ENCODE measurements at regions of chr1 and their contacts with region 1.

Region 1: DNA sequence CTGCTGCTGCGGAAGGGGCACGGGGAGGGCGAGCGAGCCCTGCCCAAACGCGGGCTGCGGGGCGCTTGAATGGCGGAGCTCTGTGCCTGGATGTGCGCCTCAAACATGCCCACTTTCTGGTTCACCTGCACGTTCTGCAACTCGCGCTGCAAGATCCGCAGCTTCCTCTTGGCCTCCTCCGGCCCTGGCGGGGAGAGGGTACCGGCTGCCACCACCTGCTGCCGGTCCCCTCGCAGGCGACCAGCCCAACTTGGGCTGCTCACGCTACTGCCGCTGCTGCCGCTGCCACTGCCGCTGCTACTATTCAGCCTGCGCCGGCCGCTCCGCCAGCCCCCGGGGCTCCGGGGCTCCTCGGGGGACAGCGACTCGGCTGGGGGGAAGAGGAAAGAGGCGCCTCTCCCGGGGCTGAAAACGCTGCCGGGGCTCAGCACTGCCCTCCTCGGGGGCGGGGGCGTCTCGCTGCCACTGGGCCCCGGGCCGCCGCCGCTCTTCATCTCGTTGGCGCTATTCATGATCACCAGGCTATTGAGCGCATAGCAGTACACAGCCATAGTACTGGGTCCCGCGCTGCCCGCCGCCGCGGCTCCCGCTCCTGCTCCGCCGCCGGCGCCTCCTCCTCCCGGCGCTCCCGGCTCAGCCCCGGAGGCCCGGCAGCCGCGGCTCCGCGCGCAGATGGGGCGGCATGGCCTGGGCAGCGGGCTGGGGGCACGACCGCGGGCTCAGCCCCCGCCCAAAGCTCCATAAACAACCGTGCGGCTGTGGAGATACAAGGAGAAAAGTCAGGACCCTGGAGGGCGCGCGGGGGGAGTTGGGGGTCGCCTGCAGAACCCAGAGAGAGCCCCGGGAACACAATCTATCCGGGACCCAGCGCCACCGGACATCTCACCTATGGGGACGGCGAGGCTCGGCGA is 1.9 kb downstream of the ITPKB start:
- DNase-seq: peak in 8 of 10 donors; percentile 45 to 77 (median 60)
- ATAC-seq: peak; percentile 7 to 11
- H3K4me3 Mint-ChIP-seq: peak overlapping the region; percentile 89 to 99 (median 97)
- H3K27ac Mint-ChIP-seq: peak overlapping the region; percentile 85 to 99 (median 97)
- H3K4me1 Mint-ChIP-seq: peaks cover 24 to 65% (median 47%) of the 10 kb centered on the region in 4 donors
- H3K27me3 Mint-ChIP-seq: no peaks in the 10 kb centered on the region

Region 2: DNA sequence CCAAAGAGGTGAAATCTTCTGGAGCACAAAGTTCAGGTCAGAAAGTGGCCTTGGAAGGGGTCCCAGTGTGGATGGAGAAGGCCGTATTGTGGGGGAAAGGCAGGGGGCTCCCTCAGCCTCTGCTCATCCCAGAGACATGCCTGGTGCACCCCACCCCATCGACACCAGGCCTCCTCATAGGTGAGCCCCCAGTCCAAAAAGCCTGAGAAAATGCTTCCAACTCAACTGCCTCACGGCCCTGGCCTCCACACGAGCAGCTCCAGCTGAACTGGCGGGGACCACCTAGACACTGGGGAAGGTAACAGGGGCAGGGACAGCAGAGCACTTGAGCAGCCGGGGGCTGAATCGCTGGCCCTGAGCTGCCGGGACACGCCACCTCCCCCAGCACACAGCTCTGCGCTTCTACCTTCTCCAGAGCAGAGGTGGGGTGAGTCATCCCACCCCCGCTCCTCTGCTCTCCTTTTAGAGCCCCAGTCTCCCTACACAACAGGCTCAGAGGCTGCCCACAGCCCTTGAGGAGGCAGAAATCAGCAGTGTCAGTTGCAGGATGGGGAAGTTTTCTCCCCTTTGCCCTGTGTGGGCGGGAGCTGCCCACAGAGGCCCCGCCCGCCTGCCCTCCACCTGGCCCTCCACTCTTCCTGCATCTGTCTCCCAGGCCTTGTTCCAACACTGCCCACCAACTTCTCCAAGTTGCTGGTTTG is 94.1 kb before region 1 on chr1:
- POLR2A ChIA-PET with region 1: interaction called, 19 read pairs
- DNase-seq: peak in 4 of 10 donors; percentile 25 to 64 (median 52)
- ATAC-seq: peak; percentile 52 to 69
- H3K4me3 Mint-ChIP-seq: peak overlapping the region; percentile 53 to 86 (median 74)
- H3K27ac Mint-ChIP-seq: peak overlapping the region in 9 of 10 donors; percentile 88 to 97 (median 93)
- H3K4me1 Mint-ChIP-seq: peaks cover 28 to 70% (median 67%) of the 10 kb centered on the region in 4 donors
- H3K27me3 Mint-ChIP-seq: no peaks in the 10 kb centered on the region

Region 3: GRCh38 chr1:226662642-226663326 is 74.4 kb before region 1 on chr1:
- POLR2A ChIA-PET with region 1: interaction called, 10 read pairs
- DNase-seq: peak; percentile 61 to 93 (median 84)
- ATAC-seq: peak; percentile 83 to 88
- H3K4me3 Mint-ChIP-seq: peak overlapping the region in 9 of 10 donors; percentile 54 to 91 (median 81)
- H3K27ac Mint-ChIP-seq: peak overlapping the region in 1 of 10 donors; percentile 97
- H3K4me1 Mint-ChIP-seq: peaks cover 0 to 56% (median 0%) of the 10 kb centered on the region in 4 donors
- H3K27me3 Mint-ChIP-seq: no peaks in the 10 kb centered on the region

Region 4: DNA sequence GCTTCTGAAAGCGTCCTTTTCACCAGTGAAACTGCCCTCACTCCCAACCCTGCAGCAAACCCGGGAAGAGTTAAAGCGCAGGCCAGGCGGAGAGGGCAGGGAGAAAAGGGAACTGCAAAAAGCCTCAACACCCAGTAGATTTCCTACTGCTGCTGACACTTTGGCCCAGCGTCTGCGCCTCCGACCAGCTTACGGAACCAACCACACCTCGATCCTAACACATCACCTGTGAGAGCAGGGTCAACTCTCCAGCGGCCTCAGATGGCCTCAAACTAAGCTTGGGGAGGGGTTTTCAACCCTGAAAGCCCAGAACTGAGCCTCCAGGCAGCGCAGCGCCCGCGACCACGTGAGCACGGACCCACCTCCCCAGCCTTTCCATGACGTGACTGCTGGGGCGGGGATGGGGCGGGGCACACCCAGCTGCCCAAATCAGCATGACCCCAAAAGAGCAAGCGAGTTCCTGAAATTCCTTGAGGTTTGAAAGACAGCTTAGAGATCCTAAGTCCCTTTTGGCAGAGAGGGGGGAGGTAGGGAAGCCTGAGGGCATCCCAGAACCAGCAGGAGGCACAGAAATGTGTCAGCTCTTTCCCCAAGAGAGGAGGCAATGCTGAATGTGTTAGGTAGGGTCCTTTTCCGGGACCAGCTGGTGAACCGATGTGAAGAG is 57.2 kb before region 1 on chr1:
- POLR2A ChIA-PET with region 1: interaction called, 14 read pairs
- DNase-seq: peak; percentile 65 to 89 (median 76)
- ATAC-seq: peak; percentile 13 to 30
- H3K4me3 Mint-ChIP-seq: peak overlapping the region; percentile 75 to 97 (median 88)
- H3K27ac Mint-ChIP-seq: peak overlapping the region; percentile 99 to 100 (median 99)
- H3K4me1 Mint-ChIP-seq: peaks cover 70 to 100% (median 99%) of the 10 kb centered on the region in 4 donors
- H3K27me3 Mint-ChIP-seq: no peaks in the 10 kb centered on the region

Region 5: GRCh38 chr1:226697151-226697939 is 39.8 kb before region 1 on chr1:
- POLR2A ChIA-PET with region 1: interaction called, 11 read pairs
- DNase-seq: peak in 3 of 10 donors; percentile 48 to 76 (median 72)
- ATAC-seq: peak; percentile 72 to 86
- H3K4me3 Mint-ChIP-seq: peak overlapping the region; percentile 34 to 85 (median 77)
- H3K27ac Mint-ChIP-seq: peak overlapping the region; percentile 98 to 100 (median 99)
- H3K4me1 Mint-ChIP-seq: peaks cover 52 to 98% (median 95%) of the 10 kb centered on the region in 4 donors
- H3K27me3 Mint-ChIP-seq: no peaks in the 10 kb centered on the region

Region 6: GRCh38 chr1:226712742-226713419 is 24.3 kb before region 1 on chr1:
- POLR2A ChIA-PET with region 1: no interaction called
- DNase-seq: peak in 1 of 10 donors; percentile 24
- ATAC-seq: no peak
- H3K4me3 Mint-ChIP-seq: peak overlapping the region; percentile 67 to 89 (median 82)
- H3K27ac Mint-ChIP-seq: peak overlapping the region; percentile 89 to 100 (median 95)
- H3K4me1 Mint-ChIP-seq: peaks cover 56 to 99% (median 98%) of the 10 kb centered on the region in 4 donors
- H3K27me3 Mint-ChIP-seq: peaks cover 0 to 5% (median 0%) of the 10 kb centered on the region in 5 donors

Region 7: GRCh38 chr1:226723657-226724532 is 13.3 kb before region 1 on chr1:
- POLR2A ChIA-PET with region 1: no interaction called
- DNase-seq: peak in 1 of 10 donors; percentile 19
- ATAC-seq: peak; percentile 15 to 36
- H3K4me3 Mint-ChIP-seq: peak overlapping the region; percentile 78 to 99 (median 95)
- H3K27ac Mint-ChIP-seq: peak overlapping the region; percentile 86 to 98 (median 97)
- H3K4me1 Mint-ChIP-seq: peaks cover 62 to 98% (median 96%) of the 10 kb centered on the region in 4 donors
- H3K27me3 Mint-ChIP-seq: no peaks in the 10 kb centered on the region

Region 8: GRCh38 chr1:226798427-226799411 is 61.6 kb after region 1 on chr1:
- POLR2A ChIA-PET with region 1: interaction called, 10 read pairs
- DNase-seq: peak; percentile 28 to 73 (median 54)
- ATAC-seq: peak; percentile 82 to 91
- H3K4me3 Mint-ChIP-seq: peak overlapping the region; percentile 58 to 84 (median 70)
- H3K27ac Mint-ChIP-seq: peak overlapping the region; percentile 97 to 100 (median 99)
- H3K4me1 Mint-ChIP-seq: peaks cover 23 to 40% (median 35%) of the 10 kb centered on the region in 4 donors
- H3K27me3 Mint-ChIP-seq: no peaks in the 10 kb centered on the region

Region 9: GRCh38 chr1:226827968-226828513 is 90.9 kb after region 1 on chr1:
- POLR2A ChIA-PET with region 1: interaction called, 12 read pairs
- DNase-seq: peak; percentile 85 to 96 (median 92)
- ATAC-seq: peak; percentile 99
- H3K4me3 Mint-ChIP-seq: peak overlapping the region; percentile 50 to 76 (median 64)
- H3K27ac Mint-ChIP-seq: peak overlapping the region; percentile 62 to 95 (median 88)
- H3K4me1 Mint-ChIP-seq: peaks cover 16 to 44% (median 38%) of the 10 kb centered on the region in 4 donors
- H3K27me3 Mint-ChIP-seq: no peaks in the 10 kb centered on the region

Measured in naive thymus-derived CD8-positive, alpha-beta T cell (primary cell).